Breast epithelium (tissue), 4 donors: ENCODE measurements at regions of chr2 and their contacts with region 1.

Region 1: DNA sequence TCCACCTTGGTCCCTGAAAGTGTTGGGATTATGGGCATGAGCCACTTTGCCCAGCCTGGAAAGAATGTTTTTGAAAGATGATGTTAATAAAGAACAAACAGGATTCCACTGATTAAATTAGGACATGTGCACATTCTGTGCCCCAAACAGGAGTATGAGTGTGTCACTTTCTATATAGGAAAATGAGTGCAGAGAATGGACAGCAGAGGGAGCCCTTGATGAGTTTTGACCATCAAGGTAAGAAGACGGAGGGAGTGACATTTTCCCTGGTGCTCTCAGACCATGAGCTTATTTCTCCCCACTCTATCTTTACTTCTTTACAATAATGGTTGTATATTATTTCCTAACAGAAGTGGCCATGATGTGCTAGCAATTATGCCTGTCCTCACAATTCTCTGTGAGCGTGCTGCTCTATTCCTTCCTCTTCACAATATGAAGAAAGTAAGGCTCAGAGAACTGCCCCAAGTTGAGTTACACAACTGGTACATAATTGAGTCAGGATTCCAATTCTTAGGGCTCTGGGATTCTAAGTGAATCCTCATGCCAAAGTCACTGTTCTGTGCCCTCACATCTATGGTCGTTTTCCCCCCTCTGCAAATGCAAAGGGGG is 20.6 kb downstream of the RPL37A start:
- DNase-seq: peak; percentile 55 to 70
- H3K4me3 ChIP-seq: no peak overlapping the region
- H3K27ac ChIP-seq: no peak overlapping the region
- H3K4me1 ChIP-seq: no peaks in the 10 kb centered on the region
- H3K27me3 ChIP-seq: no peaks in the 10 kb centered on the region
- CTCF ChIP-seq: peak; percentile 71 to 85 (median 83)
- POLR2A ChIP-seq: no peak

Region 2: DNA sequence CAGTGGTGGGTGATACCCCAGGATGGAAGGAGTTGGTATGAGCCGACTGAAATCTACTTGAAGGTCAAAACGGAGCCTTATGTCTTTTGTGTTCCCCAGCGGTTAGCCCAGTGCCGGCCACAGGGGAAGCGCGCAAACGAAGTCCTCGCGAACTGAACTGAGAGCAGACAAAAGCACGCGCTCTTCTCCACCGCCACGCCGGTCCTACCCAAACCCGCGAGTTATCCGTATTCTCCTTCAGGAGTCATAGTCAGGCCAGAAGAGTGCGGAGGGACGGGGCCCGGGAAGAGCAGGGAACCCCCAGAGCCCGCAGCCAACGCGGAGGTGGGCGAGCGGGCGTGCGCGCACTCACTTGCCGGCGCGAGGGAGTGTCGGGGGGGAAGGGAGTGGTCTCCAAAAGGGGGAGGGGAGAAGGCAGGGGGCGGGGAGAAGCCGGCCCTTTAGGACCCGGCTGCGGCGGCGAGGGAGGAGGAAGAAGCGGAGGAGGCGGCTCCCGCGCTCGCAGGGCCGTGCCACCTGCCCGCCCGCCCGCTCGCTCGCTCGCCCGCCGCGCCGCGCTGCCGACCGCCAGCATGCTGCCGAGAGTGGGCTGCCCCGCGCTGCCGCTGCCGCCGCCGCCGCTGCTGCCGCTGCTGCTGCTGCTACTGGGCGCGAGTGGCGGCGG is 113.8 kb after region 1 on chr2 and contains the start of gene IGFBP2:
- intact Hi-C with region 1: loop called (anchors 10 kb)
- DNase-seq: peak in 1 of 2 donors; percentile 49
- H3K4me3 ChIP-seq: peak within 1 kb of the TSS; percentile 40 to 75 (median 72)
- H3K27ac ChIP-seq: peak within 1 kb of the TSS; percentile 50 to 52
- H3K4me1 ChIP-seq: no peaks in the 10 kb centered on the region
- H3K27me3 ChIP-seq: peaks cover 0 to 3% of the 10 kb centered on the region in 2 donors
- CTCF ChIP-seq: peak in 1 of 3 donors; percentile 18
- POLR2A ChIP-seq: no peak
- total RNA-seq, gene IGFBP2: 16.0 to 131 (median 115) TPM

Region 3: GRCh38 chr2:216653931-216654365 is 134.7 kb after region 1 on chr2:
- intact Hi-C with region 1: loop called (anchors 1 kb)
- DNase-seq: no peak
- H3K4me3 ChIP-seq: no peak overlapping the region
- H3K27ac ChIP-seq: peak overlapping the region; percentile 16 to 18
- H3K4me1 ChIP-seq: no peaks in the 10 kb centered on the region
- H3K27me3 ChIP-seq: no peaks in the 10 kb centered on the region
- CTCF ChIP-seq: no peak
- POLR2A ChIP-seq: no peak